Activated CD4-positive, alpha-beta T cell treated with anti-CD3 and anti-CD28 coated beads, Interleukin-2, amount 10 ng/mL, durations not matched to agents 24 days and 14 days (primary cell): ENCODE measurements at regions of chr7 and their contacts with region 1.

Region 1: GRCh38 chr7:121278120-121279021 is 50.4 kb upstream of the WNT16 start:
- DNase-seq: no peak
- H3K4me3 Mint-ChIP-seq: peak overlapping the region; percentile 29
- H3K27ac Mint-ChIP-seq: peak overlapping the region; percentile 70
- H3K4me1 Mint-ChIP-seq: peaks cover 19% of the 10 kb centered on the region
- H3K27me3 Mint-ChIP-seq: peaks cover 18% of the 10 kb centered on the region

Region 2: DNA sequence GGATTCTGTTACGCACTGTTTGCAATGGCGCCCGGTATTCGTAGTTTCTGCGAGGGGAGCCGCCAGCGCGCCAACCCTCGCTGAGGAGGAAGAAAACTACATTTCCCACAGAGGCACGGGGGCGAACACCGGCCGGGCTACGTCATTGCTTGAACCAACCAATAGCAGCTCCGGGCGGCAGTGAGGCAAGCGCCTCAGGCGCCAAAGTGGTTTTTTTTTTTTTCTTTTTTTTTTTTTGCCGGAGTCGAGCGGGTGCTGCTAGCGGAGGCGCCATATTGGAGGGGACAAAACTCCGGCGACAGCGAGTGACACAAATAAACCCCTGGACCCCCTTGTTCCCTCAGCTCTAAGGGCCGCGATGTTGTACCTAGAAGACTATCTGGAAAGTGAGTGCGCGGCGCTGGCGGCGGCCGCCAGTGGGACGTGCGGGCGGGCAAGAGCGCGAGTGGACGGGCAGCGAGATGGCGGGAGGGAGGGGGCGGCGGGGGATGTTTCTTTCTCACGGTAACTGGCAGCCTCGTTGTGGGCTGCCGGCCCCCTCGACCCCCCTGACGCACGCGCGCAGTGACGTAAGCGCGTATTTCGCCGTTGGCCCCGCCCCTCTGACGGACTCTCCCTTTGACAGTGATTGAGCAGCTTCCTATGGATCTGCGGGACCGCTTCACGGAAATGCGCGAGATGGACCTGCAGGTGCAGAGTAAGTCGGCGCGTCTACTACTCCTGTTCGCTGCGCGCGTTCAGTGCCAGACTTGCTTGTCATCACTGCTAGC is 327.6 kb before region 1 on chr7 and contains the start of gene ING3:
- intact Hi-C with region 1: loop called (anchors 2 kb)
- DNase-seq: peak; percentile 100
- H3K4me3 Mint-ChIP-seq: peak within 1 kb of the TSS; percentile 96
- H3K27ac Mint-ChIP-seq: peak within 1 kb of the TSS; percentile 99
- H3K4me1 Mint-ChIP-seq: peaks cover 23% of the 10 kb centered on the region
- H3K27me3 Mint-ChIP-seq: peaks cover 17% of the 10 kb centered on the region
- total RNA-seq, gene ING3: 23.5 and 24.3 TPM in 2 replicates

Region 3: DNA sequence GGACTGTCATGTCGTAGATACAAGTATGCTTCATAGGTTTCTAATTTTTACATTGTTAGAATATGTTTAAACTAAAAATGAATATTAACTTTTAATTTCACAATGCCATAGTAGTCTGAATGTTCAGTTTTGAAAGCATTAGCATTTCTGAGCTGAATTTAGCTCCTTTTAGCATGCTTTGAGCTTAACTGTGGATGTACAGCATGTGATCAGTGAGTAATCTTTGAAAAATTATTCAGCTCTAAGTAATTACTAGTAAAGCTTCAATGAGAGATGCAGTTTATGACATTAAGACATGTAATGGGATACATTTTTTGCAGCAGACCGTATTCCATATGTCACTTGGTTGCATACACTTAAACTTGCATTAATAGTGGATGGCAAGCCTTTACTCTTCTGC is 63.7 kb before region 1 on chr7:
- intact Hi-C with region 1: no loop called
- DNase-seq: no peak
- H3K4me3 Mint-ChIP-seq: no peak overlapping the region
- H3K27ac Mint-ChIP-seq: no peak overlapping the region
- H3K4me1 Mint-ChIP-seq: no peaks in the 10 kb centered on the region
- H3K27me3 Mint-ChIP-seq: peaks cover 2% of the 10 kb centered on the region

Region 4: GRCh38 chr7:121307021-121307574 is 28.7 kb after region 1 on chr7:
- intact Hi-C with region 1: loop called (anchors 2 kb)
- DNase-seq: no peak
- H3K4me3 Mint-ChIP-seq: no peak overlapping the region
- H3K27ac Mint-ChIP-seq: no peak overlapping the region
- H3K4me1 Mint-ChIP-seq: no peaks in the 10 kb centered on the region
- H3K27me3 Mint-ChIP-seq: peaks cover 8% of the 10 kb centered on the region

Region 5: GRCh38 chr7:121337398-121337797 is 59.0 kb after region 1 on chr7:
- intact Hi-C with region 1: loop called (anchors 5 kb)
- DNase-seq: no peak
- H3K4me3 Mint-ChIP-seq: no peak overlapping the region
- H3K27ac Mint-ChIP-seq: no peak overlapping the region
- H3K4me1 Mint-ChIP-seq: no peaks in the 10 kb centered on the region
- H3K27me3 Mint-ChIP-seq: peaks cover 21% of the 10 kb centered on the region

Region 6: DNA sequence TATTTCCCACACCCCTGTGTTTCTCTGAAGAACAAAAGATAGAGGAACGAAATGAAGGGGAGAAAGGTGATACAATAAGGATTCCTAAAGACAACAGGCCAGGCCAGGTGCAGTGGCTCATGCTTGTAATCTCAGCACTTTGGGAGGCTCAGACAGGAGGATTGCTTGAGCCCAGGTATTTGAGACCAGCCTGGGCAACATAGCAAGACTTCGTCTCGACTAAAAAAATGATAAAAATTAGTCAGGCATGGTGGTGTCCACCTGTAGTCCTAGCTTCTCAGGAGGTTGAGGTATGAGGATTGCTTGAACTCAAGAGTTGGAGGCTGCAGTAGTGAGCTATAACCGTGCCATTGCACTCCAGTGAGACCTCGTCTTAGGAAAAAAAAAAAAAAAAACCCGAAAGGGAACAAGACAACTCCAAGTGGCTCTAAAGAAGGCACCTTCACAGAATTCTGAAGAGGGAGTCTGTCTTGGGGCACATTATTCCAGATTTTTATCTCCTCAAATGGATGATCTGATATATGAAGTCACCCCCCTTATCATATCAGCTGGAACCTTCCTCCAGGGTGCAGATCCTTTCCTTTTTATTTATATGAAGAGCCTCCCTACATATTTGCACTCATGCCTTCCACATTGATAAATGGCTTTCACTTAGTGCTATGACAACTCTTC is 159.2 kb after region 1 on chr7:
- intact Hi-C with region 1: loop called (anchors 1 kb)
- DNase-seq: no peak
- H3K4me3 Mint-ChIP-seq: peak overlapping the region; percentile 73
- H3K27ac Mint-ChIP-seq: peak overlapping the region; percentile 92
- H3K4me1 Mint-ChIP-seq: peaks cover 36% of the 10 kb centered on the region
- H3K27me3 Mint-ChIP-seq: no peaks in the 10 kb centered on the region

Region 7: GRCh38 chr7:121530227-121531174 is 252.1 kb after region 1 on chr7:
- intact Hi-C with region 1: loop called (anchors 1 kb)
- DNase-seq: peak; percentile 89
- H3K4me3 Mint-ChIP-seq: peak overlapping the region; percentile 63
- H3K27ac Mint-ChIP-seq: peak overlapping the region; percentile 96
- H3K4me1 Mint-ChIP-seq: peaks cover 47% of the 10 kb centered on the region
- H3K27me3 Mint-ChIP-seq: no peaks in the 10 kb centered on the region